GM12878 (cell line): ENCODE measurements at regions of chr1 and their contacts with region 1.

Region 1: DNA sequence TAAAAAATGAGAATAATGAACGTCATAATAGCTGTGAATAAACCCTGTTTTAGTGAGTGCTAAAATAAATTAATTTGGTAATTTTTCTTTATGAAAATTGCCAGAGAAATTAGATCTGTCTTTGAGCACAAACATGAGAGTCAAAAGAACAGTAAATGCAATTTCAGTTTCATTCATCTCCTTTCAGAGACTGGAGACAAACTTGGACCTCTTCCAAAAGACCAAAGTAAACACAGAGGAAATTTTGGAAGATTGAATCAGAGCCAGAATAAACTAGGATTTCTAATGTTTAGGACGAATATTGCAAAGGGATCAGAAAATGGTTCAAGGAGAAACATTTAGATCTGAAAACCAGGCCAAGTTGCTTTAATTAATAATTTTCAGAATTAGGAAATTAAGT is 310.1 kb downstream of the ADGRL2 start:
- DNase-seq: no peak
- ATAC-seq: no peak
- H3K4me3 ChIP-seq: no peak overlapping the region
- H3K27ac ChIP-seq: no peak overlapping the region
- H3K4me1 ChIP-seq: no peaks in the 10 kb centered on the region
- H3K27me3 ChIP-seq: no peaks in the 10 kb centered on the region
- CTCF ChIP-seq: no peak
- EP300 ChIP-seq: no peak
- POLR2A ChIP-seq: no peak
- RAD21 ChIP-seq: no peak

Region 2: GRCh38 chr1:82125119-82125518 is 14.3 kb after region 1 on chr1:
- CTCF ChIA-PET with region 1: interaction called, 7 read pairs
- POLR2A ChIA-PET with region 1: interaction called, 4 read pairs
- RAD21 ChIA-PET with region 1: interaction called, 8 read pairs
- SMC1A ChIA-PET with region 1: interaction called, 33 read pairs
- in situ Hi-C with region 1: no loop called
- intact Hi-C with region 1: no loop called
- DNase-seq: no peak
- ATAC-seq: no peak
- H3K4me3 ChIP-seq: no peak overlapping the region
- H3K27ac ChIP-seq: no peak overlapping the region
- H3K4me1 ChIP-seq: no peaks in the 10 kb centered on the region
- H3K27me3 ChIP-seq: no peaks in the 10 kb centered on the region
- CTCF ChIP-seq: no peak
- EP300 ChIP-seq: no peak
- POLR2A ChIP-seq: no peak
- RAD21 ChIP-seq: no peak